ENCODE measurements at regions of chr7 and their contacts with region 1.

Region 1: GRCh38 chr7:98202367-98203195 is 8.7 kb upstream of the BHLHA15 start:
- DNase-seq: peak; percentile 17 to 87 (median 68)
- H3K4me3 ChIP-seq: peak overlapping the region; percentile 24
- H3K4me3 Mint-ChIP-seq: peak overlapping the region; percentile 26 to 88 (median 76)
- H3K27ac ChIP-seq: no peak overlapping the region
- H3K27ac Mint-ChIP-seq: peak overlapping the region; percentile 29 to 98 (median 80)
- H3K4me1 ChIP-seq: peaks cover 50% of the 10 kb centered on the region
- H3K4me1 Mint-ChIP-seq: peaks cover 36 to 61% (median 38%) of the 10 kb centered on the region in 3 donors
- H3K27me3 ChIP-seq: no peaks in the 10 kb centered on the region
- H3K27me3 Mint-ChIP-seq: no peaks in the 10 kb centered on the region

Region 2: DNA sequence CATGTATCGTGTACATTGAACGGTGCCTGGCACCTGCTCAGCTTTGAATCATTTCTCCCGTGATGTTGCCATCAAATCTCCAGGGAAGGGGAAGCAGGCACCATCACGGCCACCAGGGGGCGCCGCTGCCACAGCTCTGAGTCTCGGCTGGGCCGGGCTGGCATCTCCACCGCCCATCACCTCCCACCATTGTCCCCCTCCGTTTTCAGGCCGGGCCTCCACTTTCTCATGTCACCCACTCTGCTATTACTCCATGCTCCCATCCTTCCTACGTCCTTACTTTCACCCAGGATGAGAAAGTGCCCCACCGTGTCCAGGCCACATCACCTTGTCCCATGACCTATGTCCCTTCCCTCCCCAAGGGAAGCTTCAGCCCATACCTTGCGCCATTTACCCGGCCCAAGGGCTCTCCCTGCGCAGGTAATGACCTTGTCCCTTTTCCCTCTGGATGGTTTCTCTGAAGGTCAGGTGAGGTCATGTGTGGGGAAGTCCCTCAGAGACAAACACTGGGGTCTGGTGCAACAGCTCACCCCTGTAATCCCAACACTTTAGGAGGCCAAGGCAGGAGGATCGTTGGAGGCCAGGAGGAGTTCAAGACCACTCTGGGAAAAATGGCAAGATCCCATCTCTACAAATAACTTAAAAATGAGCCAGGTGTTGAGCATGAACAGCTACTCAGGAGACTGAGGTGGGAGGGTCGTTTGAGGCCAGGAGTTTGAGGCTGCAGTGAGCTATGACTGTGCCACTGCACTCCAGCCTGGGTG is 180.8 kb before region 1 on chr7:
- CTCF ChIA-PET with region 1: interaction called, 12 read pairs
- POLR2A ChIA-PET with region 1: no interaction called
- DNase-seq: peak; percentile 51 to 81 (median 65)
- H3K4me3 ChIP-seq: no peak overlapping the region
- H3K4me3 Mint-ChIP-seq: no peak overlapping the region
- H3K27ac ChIP-seq: no peak overlapping the region
- H3K27ac Mint-ChIP-seq: no peak overlapping the region
- H3K4me1 ChIP-seq: no peaks in the 10 kb centered on the region
- H3K4me1 Mint-ChIP-seq: peaks cover 0 to 5% (median 3%) of the 10 kb centered on the region in 3 donors
- H3K27me3 ChIP-seq: no peaks in the 10 kb centered on the region
- H3K27me3 Mint-ChIP-seq: peaks cover 10 to 21% of the 10 kb centered on the region in 2 donors

Measured in CD8-positive, alpha-beta memory T cell (primary cell).